CD4-positive, alpha-beta memory T cell (primary cell): ENCODE measurements at regions of chr4 and their contacts with region 1.

Region 1: DNA sequence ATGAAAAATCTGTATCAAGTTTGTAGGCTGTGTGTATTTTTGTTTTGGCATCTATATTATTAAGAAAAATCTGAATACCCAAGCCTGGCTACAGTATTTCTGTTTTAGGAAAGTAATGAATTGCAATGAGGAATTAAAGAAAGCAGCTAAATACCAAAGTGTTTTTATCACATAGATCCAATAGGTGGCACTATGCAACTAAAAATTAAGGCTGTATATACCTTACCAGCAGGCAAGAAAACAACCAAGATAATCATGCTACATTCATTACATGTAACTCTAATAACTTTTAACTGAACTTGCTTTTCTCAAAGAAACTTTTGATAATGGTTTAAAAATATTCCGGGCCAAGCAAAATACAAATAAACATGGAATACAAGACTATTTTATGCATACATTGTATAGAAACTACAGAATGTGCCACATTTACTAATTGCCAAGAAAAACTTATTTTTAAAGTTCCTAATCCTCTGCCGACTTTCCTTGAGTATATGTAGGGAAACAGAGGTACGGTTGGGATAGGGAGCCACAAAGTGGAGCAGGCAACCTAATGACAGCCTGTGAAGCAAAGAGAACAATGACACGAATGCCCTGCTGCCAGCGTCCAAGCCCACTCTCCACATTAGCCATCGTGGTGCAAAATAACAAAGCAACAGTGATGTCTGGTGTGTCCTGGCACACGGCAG is 63.7 kb downstream of the SEC24D start:
- DNase-seq: peak in 4 of 5 donors; percentile 40 to 49 (median 44)
- H3K4me3 ChIP-seq: no peak overlapping the region
- H3K4me3 Mint-ChIP-seq: no peak overlapping the region
- H3K27ac ChIP-seq: no peak overlapping the region
- H3K27ac Mint-ChIP-seq: peak overlapping the region in 1 of 7 donors; percentile 42
- H3K4me1 ChIP-seq: no peaks in the 10 kb centered on the region
- H3K4me1 Mint-ChIP-seq: no peaks in the 10 kb centered on the region
- H3K27me3 ChIP-seq: no peaks in the 10 kb centered on the region
- H3K27me3 Mint-ChIP-seq: no peaks in the 10 kb centered on the region

Region 2: DNA sequence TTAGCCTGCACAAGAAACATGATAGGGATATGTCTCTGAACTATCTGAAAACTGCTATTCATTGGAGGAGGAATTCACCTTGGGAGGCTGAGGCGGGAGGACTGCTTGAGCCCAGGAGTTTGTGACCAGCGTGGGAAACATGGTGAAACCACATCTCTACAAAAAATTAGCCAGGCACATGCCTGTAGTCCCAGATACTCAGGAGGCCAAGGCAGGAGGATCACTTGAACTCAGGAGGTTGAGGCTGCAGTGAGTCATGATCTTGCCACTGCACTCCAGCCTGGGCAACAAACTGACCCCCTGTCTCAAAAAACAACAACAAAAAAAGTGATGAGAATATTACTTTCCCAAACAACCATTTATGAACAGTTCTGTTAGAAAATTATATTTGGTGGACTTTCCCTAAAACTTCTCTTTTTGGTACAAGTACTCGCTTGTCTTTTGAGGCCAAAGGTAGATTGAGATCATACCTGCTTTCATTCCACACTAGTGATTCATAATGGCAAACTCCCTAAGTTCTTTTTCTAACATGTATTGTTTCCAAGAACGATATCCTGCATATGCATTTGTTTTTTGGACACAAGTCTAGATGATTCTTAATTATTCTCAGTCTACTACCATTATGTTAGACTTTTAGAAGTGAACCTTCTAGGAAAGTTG is 53.6 kb before region 1 on chr4:
- CTCF ChIA-PET with region 1: no interaction called
- POLR2A ChIA-PET with region 1: no interaction called
- intact Hi-C with region 1: no loop called
- DNase-seq: no peak
- H3K4me3 ChIP-seq: no peak overlapping the region
- H3K4me3 Mint-ChIP-seq: no peak overlapping the region
- H3K27ac ChIP-seq: no peak overlapping the region
- H3K27ac Mint-ChIP-seq: peak overlapping the region in 2 of 7 donors; percentile 5 to 51
- H3K4me1 ChIP-seq: no peaks in the 10 kb centered on the region
- H3K4me1 Mint-ChIP-seq: no peaks in the 10 kb centered on the region
- H3K27me3 ChIP-seq: no peaks in the 10 kb centered on the region
- H3K27me3 Mint-ChIP-seq: no peaks in the 10 kb centered on the region

Region 3: DNA sequence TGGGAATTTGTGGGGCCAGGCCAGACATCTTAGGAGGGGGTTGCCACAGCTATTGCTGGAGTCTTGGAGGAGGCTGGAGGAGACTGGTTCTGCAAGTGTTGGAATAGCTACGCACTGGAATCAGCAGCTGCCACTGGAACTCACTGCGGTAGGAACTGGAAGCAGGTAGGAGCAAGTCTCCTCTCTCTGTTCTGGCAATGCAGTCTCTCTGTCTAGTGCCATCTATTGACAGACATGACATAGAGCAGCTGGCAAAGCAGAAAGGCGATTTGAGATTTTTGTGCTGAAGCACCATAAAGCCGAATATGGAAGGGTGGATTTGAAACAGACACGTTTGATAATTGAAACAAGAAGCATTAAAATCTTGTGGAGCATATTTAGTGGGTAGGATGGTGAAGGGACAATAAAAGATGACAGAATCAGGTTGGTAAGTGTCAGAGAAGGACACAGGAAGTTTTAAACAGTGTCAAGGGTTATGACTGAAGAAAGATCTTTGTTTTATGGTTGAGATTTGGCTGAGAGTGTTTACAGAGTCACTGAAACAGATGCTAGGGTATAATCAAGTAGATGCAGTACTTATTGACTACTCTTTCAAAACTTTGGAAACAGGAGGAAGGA is 93.0 kb after region 1 on chr4:
- CTCF ChIA-PET with region 1: interaction called, 39 read pairs
- POLR2A ChIA-PET with region 1: no interaction called
- intact Hi-C with region 1: loop called (anchors 1 kb)
- DNase-seq: peak in 4 of 5 donors; percentile 22 to 35 (median 26)
- H3K4me3 ChIP-seq: no peak overlapping the region
- H3K4me3 Mint-ChIP-seq: no peak overlapping the region
- H3K27ac ChIP-seq: no peak overlapping the region
- H3K27ac Mint-ChIP-seq: no peak overlapping the region
- H3K4me1 ChIP-seq: no peaks in the 10 kb centered on the region
- H3K4me1 Mint-ChIP-seq: no peaks in the 10 kb centered on the region
- H3K27me3 ChIP-seq: no peaks in the 10 kb centered on the region
- H3K27me3 Mint-ChIP-seq: no peaks in the 10 kb centered on the region

Region 4: DNA sequence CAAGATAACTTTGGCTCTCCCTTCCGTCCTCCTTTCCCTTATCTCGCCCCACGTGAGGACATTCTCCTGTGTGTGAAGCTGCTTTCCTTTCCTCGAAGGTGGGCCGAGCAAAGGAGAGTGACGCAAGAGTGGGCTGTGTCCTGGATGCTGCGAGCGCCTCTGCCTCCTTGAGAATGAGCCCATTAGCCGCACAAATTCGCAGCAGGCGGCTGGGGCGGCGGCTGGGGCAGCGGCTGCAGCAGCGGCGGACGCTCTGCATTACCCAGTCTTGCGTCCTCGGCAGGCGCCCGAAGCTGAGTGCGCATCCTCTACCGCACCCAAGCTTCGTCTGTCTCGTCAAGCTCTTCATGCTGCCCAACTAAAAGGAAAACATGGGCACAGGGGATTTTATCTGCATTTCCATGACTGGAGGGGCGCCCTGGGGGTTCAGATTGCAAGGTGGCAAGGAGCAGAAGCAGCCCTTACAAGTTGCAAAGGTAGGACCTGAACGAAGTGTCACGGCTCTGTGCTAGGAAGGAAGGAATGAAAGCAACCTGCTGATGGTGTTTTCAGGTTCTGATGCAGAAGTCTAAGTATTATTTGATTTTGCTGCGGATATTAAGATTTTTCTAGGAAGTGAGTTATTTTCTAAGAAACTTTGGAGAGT is 116.6 kb after region 1 on chr4 and contains the start of gene SYNPO2:
- CTCF ChIA-PET with region 1: interaction called, 98 read pairs
- POLR2A ChIA-PET with region 1: no interaction called
- intact Hi-C with region 1: loop called (anchors 1 kb)
- DNase-seq: peak in 4 of 5 donors; percentile 6 to 23 (median 20)
- H3K4me3 ChIP-seq: peak within 1 kb of the TSS in 1 of 2 donors; percentile 23
- H3K4me3 Mint-ChIP-seq: peak within 1 kb of the TSS; percentile 72 to 85 (median 83)
- H3K27ac ChIP-seq: no peak within 1 kb of the TSS
- H3K27ac Mint-ChIP-seq: no peak within 1 kb of the TSS
- H3K4me1 ChIP-seq: peaks cover 15% of the 10 kb centered on the region
- H3K4me1 Mint-ChIP-seq: peaks cover 12 to 16% (median 14%) of the 10 kb centered on the region in 4 donors
- H3K27me3 ChIP-seq: peaks cover 9% of the 10 kb centered on the region
- H3K27me3 Mint-ChIP-seq: peaks cover 19 to 23% of the 10 kb centered on the region in 2 donors
- total RNA-seq, gene SYNPO2: 1.3 to 1.4 TPM

Region 5: GRCh38 chr4:118981839-118982381 is 209.7 kb after region 1 on chr4:
- CTCF ChIA-PET with region 1: no interaction called
- POLR2A ChIA-PET with region 1: no interaction called
- intact Hi-C with region 1: loop called (anchors 10 kb)
- DNase-seq: peak; percentile 42 to 53 (median 52)
- H3K4me3 ChIP-seq: no peak overlapping the region
- H3K4me3 Mint-ChIP-seq: no peak overlapping the region
- H3K27ac ChIP-seq: no peak overlapping the region
- H3K27ac Mint-ChIP-seq: no peak overlapping the region
- H3K4me1 ChIP-seq: no peaks in the 10 kb centered on the region
- H3K4me1 Mint-ChIP-seq: no peaks in the 10 kb centered on the region
- H3K27me3 ChIP-seq: no peaks in the 10 kb centered on the region
- H3K27me3 Mint-ChIP-seq: peaks cover 3 to 5% of the 10 kb centered on the region in 2 donors

Region 6: GRCh38 chr4:119053997-119054396 is 281.8 kb after region 1 on chr4:
- CTCF ChIA-PET with region 1: no interaction called
- POLR2A ChIA-PET with region 1: no interaction called
- intact Hi-C with region 1: no loop called
- DNase-seq: no peak
- H3K4me3 ChIP-seq: no peak overlapping the region
- H3K4me3 Mint-ChIP-seq: no peak overlapping the region
- H3K27ac ChIP-seq: no peak overlapping the region
- H3K27ac Mint-ChIP-seq: no peak overlapping the region
- H3K4me1 ChIP-seq: no peaks in the 10 kb centered on the region
- H3K4me1 Mint-ChIP-seq: no peaks in the 10 kb centered on the region
- H3K27me3 ChIP-seq: no peaks in the 10 kb centered on the region
- H3K27me3 Mint-ChIP-seq: peaks cover 0 to 6% of the 10 kb centered on the region in 2 donors

Region 7: DNA sequence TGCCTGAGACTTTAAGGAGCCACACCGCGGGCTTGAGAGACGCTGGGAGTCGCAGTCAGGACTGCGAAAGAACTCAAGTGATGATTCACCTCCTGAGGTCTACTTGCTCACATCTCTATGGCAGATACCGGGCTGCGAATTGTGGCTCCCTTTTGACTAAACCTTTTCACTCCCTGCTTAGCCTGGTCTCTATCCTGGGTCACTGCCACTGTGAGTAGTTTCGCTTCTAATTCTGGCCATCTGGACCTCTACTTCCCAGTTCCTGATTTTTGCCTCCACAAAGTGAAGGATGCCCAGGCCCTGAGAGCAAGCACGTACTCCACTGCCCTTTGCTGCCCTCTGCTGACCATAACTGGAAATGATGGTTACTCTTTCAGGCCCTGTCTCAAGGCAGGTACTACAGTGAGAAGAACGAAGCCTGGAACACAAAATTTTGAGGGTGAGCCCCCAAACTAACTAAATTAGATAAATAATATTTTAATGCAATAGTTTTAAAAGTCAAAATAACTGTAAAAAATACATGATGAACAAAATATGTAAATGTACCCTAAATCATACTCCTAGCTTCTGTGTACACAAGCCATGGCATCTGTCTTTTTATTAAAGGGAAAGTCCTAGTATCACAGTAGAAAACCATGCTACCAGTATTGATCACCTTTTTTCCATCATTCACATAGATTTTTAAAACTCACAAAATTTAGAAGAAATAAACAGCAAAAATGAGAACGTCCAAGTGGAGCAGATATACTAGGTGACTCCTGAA is 1277.7 kb after region 1 on chr4:
- CTCF ChIA-PET with region 1: no interaction called
- POLR2A ChIA-PET with region 1: no interaction called
- intact Hi-C with region 1: loop called (anchors 5 kb)
- DNase-seq: peak; percentile 63 to 74 (median 69)
- H3K4me3 ChIP-seq: no peak overlapping the region
- H3K4me3 Mint-ChIP-seq: peak overlapping the region in 6 of 8 donors; percentile 13 to 87 (median 46)
- H3K27ac ChIP-seq: no peak overlapping the region
- H3K27ac Mint-ChIP-seq: peak overlapping the region in 1 of 7 donors; percentile 35
- H3K4me1 ChIP-seq: no peaks in the 10 kb centered on the region
- H3K4me1 Mint-ChIP-seq: peaks cover 2 to 6% (median 3%) of the 10 kb centered on the region in 4 donors
- H3K27me3 ChIP-seq: no peaks in the 10 kb centered on the region
- H3K27me3 Mint-ChIP-seq: no peaks in the 10 kb centered on the region